ENCODE measurements at regions of chr1 and their contacts with region 1.

Region 1: GRCh38 chr1:32362474-32363313 is at the starts of genes FAM229A and TSSK3:
- DNase-seq: no peak
- ATAC-seq: no peak; the same call in 2 of the 3 replicates
- H3K4me3 ChIP-seq: no peak within 1 kb of the TSS
- H3K27ac ChIP-seq: no peak within 1 kb of the TSS
- H3K4me1 ChIP-seq: peaks cover 0 to 4% of the 10 kb centered on the region in 2 experiments; a peak in 1 of 5 replicates
- H3K27me3 ChIP-seq: no peaks in the 10 kb centered on the region
- CTCF ChIP-seq: no peak
- EP300 ChIP-seq: no peak
- POLR2A ChIP-seq: peak; percentile 48; the same call in 1 of the 2 replicates
- RAD21 ChIP-seq: no peak
- polyA plus RNA-seq, gene FAM229A: 0.04 TPM
- polyA plus RNA-seq, gene TSSK3: 0.66 to 0.82 TPM

Region 2: GRCh38 chr1:30982937-30983336 is 1379.8 kb before region 1 on chr1:
- CTCF ChIA-PET with region 1: no interaction called
- POLR2A ChIA-PET with region 1: no interaction called
- in situ Hi-C with region 1: no loop called
- intact Hi-C with region 1: no loop called
- DNase-seq: no peak
- ATAC-seq: 0 out of 3 replicates have a peak, but pooled peaks have one; percentile 16
- H3K4me3 ChIP-seq: no peak overlapping the region
- H3K27ac ChIP-seq: no peak overlapping the region
- H3K4me1 ChIP-seq: peaks cover 4 to 6% of the 10 kb centered on the region in 2 experiments; a peak in 3 of 5 replicates
- H3K27me3 ChIP-seq: no peaks in the 10 kb centered on the region
- CTCF ChIP-seq: 0 out of 6 replicates have a peak, but pooled peaks of 1 of the 3 experiments have one; percentile 4
- EP300 ChIP-seq: no peak
- POLR2A ChIP-seq: no peak
- RAD21 ChIP-seq: no peak

Region 3: GRCh38 chr1:32179443-32180185 is 183.1 kb before region 1 on chr1 and contains the start of gene TXLNA:
- CTCF ChIA-PET with region 1: no interaction called
- POLR2A ChIA-PET with region 1: no interaction called
- in situ Hi-C with region 1: no loop called
- intact Hi-C with region 1: no loop called
- DNase-seq: peak; percentile 98 to 99 (median 99)
- ATAC-seq: peak; percentile 95
- H3K4me3 ChIP-seq: peak within 1 kb of the TSS; percentile 77
- H3K27ac ChIP-seq: peak within 1 kb of the TSS; percentile 89
- H3K4me1 ChIP-seq: peaks cover 25 to 30% of the 10 kb centered on the region in 2 experiments
- H3K27me3 ChIP-seq: no peaks in the 10 kb centered on the region
- CTCF ChIP-seq: peak in 1 of 3 experiments; percentile 4; a peak in 1 of 6 replicates
- EP300 ChIP-seq: no peak
- POLR2A ChIP-seq: peak; percentile 96
- RAD21 ChIP-seq: no peak
- polyA plus RNA-seq, gene TXLNA: 9.2 to 15.2 TPM

Region 4: DNA sequence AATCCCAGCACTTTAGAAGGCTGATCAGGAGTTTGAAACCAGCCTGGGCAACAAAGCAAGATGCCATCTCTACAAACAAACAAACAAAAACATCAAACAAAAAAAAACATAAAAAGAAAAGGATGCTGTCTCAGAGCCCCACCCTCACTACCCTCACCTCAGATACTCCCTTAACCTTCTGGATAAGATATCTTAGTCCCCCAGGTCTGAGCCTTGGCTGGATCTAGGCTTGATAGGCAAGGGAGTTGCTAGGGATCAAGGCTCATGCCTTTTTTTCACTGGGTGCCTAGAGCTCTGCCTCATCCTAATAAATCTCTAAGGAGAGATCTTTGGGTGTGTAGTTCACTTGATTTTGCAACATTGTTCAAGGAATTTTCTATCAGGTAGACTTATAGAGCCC is 63.4 kb before region 1 on chr1:
- CTCF ChIA-PET with region 1: no interaction called
- POLR2A ChIA-PET with region 1: no interaction called
- in situ Hi-C with region 1: no loop called
- intact Hi-C with region 1: no loop called
- DNase-seq: peak in 3 of 4 experiments; percentile 40 to 58 (median 47)
- ATAC-seq: peak; percentile 68
- H3K4me3 ChIP-seq: no peak overlapping the region
- H3K27ac ChIP-seq: no peak overlapping the region
- H3K4me1 ChIP-seq: peaks cover 15 to 19% of the 10 kb centered on the region in 2 experiments; a peak in 4 of 5 replicates
- H3K27me3 ChIP-seq: no peaks in the 10 kb centered on the region
- CTCF ChIP-seq: no peak
- EP300 ChIP-seq: no peak; the same call in 1 of the 2 replicates
- POLR2A ChIP-seq: no peak
- RAD21 ChIP-seq: no peak

Region 5: GRCh38 chr1:32351399-32352238 is 11.1 kb before region 1 on chr1:
- CTCF ChIA-PET with region 1: no interaction called
- POLR2A ChIA-PET with region 1: interaction called, 36 read pairs
- in situ Hi-C with region 1: no loop called
- intact Hi-C with region 1: no loop called
- DNase-seq: peak; percentile 99 to 100 (median 100)
- ATAC-seq: peak; percentile 95
- H3K4me3 ChIP-seq: peak overlapping the region; percentile 83
- H3K27ac ChIP-seq: peak overlapping the region; percentile 96
- H3K4me1 ChIP-seq: peaks cover 29 to 44% of the 10 kb centered on the region in 2 experiments
- H3K27me3 ChIP-seq: no peaks in the 10 kb centered on the region
- CTCF ChIP-seq: peak in 2 of 3 experiments; percentile 34 to 49; a peak in 5 of 6 replicates
- EP300 ChIP-seq: no peak
- POLR2A ChIP-seq: peak; percentile 76
- RAD21 ChIP-seq: no peak

Region 6: DNA sequence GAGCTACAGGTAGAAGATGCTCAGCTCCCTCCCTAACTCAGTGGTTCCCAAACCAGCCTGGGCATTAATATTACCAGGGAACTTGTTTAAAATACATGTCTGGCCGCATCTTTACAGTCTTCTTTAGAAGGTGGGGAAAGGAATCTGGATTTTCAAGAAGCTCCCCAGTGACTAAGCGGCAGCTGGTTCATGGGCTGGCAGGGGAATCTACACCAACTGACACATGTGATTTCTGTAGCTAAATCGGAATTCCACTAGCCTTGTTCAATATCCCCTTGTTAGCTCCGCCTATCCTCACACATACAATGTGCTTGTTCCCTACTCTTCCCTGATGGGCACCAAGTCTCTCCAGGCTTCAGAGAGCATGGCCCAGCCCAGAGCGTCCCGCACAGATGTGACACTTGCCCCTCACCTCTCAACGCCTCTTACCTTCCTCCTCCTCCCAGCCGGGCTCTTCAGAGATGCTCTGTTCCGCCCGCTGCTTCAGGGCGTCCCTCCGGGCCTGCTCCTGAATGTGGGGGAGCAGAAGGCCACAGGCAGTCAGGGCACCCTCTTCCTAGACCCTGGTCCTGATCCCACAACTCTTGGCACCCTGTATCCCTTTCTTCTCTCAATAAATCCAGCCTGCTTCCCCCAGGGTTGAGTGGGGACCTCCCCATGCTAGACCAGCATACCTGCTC is 15.0 kb after region 1 on chr1:
- CTCF ChIA-PET with region 1: no interaction called
- POLR2A ChIA-PET with region 1: interaction called, 16 read pairs
- in situ Hi-C with region 1: no loop called
- intact Hi-C with region 1: no loop called
- DNase-seq: peak in 1 of 4 experiments; percentile 22
- ATAC-seq: no peak; the same call in 2 of the 3 replicates
- H3K4me3 ChIP-seq: no peak overlapping the region
- H3K27ac ChIP-seq: no peak overlapping the region
- H3K4me1 ChIP-seq: no peaks in the 10 kb centered on the region
- H3K27me3 ChIP-seq: no peaks in the 10 kb centered on the region
- CTCF ChIP-seq: no peak
- EP300 ChIP-seq: no peak
- POLR2A ChIP-seq: no peak
- RAD21 ChIP-seq: no peak

Measured in K562 (cell line).